Activated CD4-positive, alpha-beta T cell treated with anti-CD3 and anti-CD28 coated beads for 36 hours (primary cell): ENCODE measurements at regions of chr17 and their contacts with region 1.

Region 1: DNA sequence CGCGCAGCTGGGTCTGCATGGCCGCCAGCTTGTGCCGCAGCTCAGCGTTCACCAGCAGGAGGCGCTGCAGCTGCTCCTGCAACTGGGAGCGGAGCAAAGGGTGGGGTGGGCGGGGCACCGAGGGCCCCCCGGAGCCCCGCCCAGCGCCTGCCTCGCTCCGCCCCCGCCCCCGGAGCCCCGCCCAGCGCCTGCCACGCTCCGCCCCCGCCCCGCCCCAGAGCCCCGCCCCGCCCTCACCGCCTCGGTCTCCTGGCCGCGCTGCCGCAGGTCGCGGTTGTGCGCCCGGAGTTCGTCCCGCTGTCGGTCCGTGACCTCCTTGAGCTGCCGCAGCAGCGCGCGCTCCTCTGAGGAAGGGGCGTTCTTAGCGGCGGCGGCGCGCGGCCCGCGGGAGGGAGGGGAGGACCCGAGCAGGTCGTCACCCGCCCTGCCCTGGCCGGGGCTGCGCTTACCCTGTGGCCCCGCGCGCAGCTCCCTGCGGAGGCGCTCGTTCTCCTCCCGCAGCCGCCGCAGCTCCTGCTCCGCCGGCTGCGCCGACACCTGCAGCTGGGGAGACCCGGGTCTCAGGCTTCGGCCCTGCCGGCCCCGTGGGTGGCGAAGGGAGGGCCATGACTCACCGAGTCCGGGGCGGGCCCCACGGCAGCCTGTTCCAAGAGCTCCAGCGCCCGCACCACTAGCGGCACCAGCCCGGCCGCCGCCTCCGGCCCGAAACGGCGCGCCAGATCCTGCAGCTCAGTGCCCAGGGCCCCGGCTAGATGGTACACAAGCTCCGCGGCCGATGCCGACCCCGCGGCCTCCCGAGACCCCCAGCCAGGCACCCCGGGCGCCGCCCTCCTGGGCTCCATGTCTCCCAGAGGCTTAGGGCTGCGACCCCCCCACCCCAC is 463 bp downstream of the RILP start:
- DNase-seq: peak; percentile 97
- ATAC-seq: peak; percentile 74
- H3K4me3 Mint-ChIP-seq: peak overlapping the region; percentile 43
- H3K27ac Mint-ChIP-seq: no peak overlapping the region
- H3K4me1 Mint-ChIP-seq: peaks cover 25% of the 10 kb centered on the region
- H3K27me3 Mint-ChIP-seq: no peaks in the 10 kb centered on the region

Region 2: GRCh38 chr17:1399679-1400512 is 249.3 kb before region 1 on chr17 and contains the start of gene YWHAE:
- CTCF ChIA-PET with region 1: no interaction called
- POLR2A ChIA-PET with region 1: no interaction called
- intact Hi-C with region 1: loop called in 1 of 2 experiments (anchors 1 kb)
- DNase-seq: peak; percentile 99
- ATAC-seq: peak; percentile 95
- H3K4me3 Mint-ChIP-seq: peak within 1 kb of the TSS; percentile 100
- H3K27ac Mint-ChIP-seq: peak within 1 kb of the TSS; percentile 100
- H3K4me1 Mint-ChIP-seq: peaks cover 27% of the 10 kb centered on the region
- H3K27me3 Mint-ChIP-seq: no peaks in the 10 kb centered on the region
- total RNA-seq, gene YWHAE: 520 to 553 TPM

Region 3: GRCh38 chr17:1561400-1562175 is 87.6 kb before region 1 on chr17:
- CTCF ChIA-PET with region 1: interaction called, 3 read pairs
- POLR2A ChIA-PET with region 1: no interaction called
- intact Hi-C with region 1: loop called in 1 of 2 experiments (anchors 1 kb)
- DNase-seq: peak; percentile 64
- ATAC-seq: peak; percentile 35
- H3K4me3 Mint-ChIP-seq: peak overlapping the region; percentile 81
- H3K27ac Mint-ChIP-seq: no peak overlapping the region
- H3K4me1 Mint-ChIP-seq: peaks cover 27% of the 10 kb centered on the region
- H3K27me3 Mint-ChIP-seq: no peaks in the 10 kb centered on the region

Region 4: GRCh38 chr17:1606352-1607033 is 42.7 kb before region 1 on chr17:
- CTCF ChIA-PET with region 1: no interaction called
- POLR2A ChIA-PET with region 1: no interaction called
- intact Hi-C with region 1: no loop called
- DNase-seq: peak; percentile 67
- ATAC-seq: no peak
- H3K4me3 Mint-ChIP-seq: peak overlapping the region; percentile 21
- H3K27ac Mint-ChIP-seq: peak overlapping the region; percentile 85
- H3K4me1 Mint-ChIP-seq: peaks cover 25% of the 10 kb centered on the region
- H3K27me3 Mint-ChIP-seq: no peaks in the 10 kb centered on the region

Region 5: GRCh38 chr17:1724506-1725362 is 75.5 kb after region 1 on chr17 and contains the start of gene WDR81:
- CTCF ChIA-PET with region 1: interaction called, 6 read pairs
- POLR2A ChIA-PET with region 1: no interaction called
- intact Hi-C with region 1: loop called in 1 of 2 experiments (anchors 2 kb)
- DNase-seq: peak; percentile 95
- ATAC-seq: peak; percentile 82
- H3K4me3 Mint-ChIP-seq: peak within 1 kb of the TSS; percentile 65
- H3K27ac Mint-ChIP-seq: peak within 1 kb of the TSS; percentile 73
- H3K4me1 Mint-ChIP-seq: peaks cover 29% of the 10 kb centered on the region
- H3K27me3 Mint-ChIP-seq: no peaks in the 10 kb centered on the region
- total RNA-seq, gene WDR81: 6.9 to 8.6 TPM

Region 6: DNA sequence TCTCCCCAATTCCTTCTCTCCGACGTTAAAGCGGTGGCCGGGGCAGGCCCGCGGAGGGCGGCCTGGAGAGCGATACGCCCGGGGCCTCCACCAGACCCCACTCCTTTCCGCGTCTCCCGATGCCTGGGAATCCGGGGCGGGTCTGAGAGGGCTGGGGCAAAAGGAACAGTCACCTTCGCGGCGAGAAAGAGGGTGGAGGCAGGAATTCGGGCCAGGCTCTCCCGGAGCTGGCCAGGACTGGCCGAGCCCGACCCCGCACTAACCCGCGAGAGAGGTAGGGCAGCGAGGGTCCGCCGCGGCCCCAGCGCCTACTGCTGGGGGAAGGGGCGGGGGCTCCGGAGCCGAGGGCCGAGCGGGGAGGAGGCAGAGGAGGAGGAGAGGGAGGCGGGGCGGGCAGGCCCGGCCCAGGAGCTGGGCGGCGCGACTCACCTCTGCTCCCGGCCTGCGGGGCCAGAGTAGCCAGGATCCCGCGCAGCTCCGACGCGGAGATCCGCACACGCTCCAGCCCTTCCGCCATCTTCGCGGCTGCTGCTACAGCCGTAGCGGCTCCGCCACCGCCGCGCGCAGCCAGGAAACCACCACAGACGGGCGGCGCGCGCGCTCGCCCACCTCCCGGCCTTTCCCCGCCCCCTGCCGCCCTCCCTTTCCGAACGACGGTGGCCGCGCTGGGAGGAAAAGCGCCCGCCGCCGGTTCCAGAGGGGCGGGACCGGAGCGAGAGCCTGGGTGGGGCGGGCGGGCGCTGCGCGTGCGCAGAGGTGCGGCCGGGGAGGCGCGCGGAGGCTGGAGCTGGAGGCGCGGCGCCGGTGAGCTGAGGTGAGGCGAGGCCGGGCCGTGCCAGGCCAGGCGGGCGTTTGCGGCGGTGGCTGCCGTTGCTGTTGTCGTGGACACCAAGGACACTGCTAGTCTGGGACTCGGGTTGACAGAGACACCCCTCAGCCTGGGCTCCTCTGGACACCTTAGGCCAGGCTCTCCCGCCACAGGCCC is 654.3 kb after region 1 on chr17 and contains the starts of genes SMG6 and SRR:
- CTCF ChIA-PET with region 1: interaction called, 3 read pairs
- POLR2A ChIA-PET with region 1: no interaction called
- intact Hi-C with region 1: loop called in 1 of 2 experiments (anchors 1 kb)
- DNase-seq: peak; percentile 98
- ATAC-seq: peak; percentile 89
- H3K4me3 Mint-ChIP-seq: peak within 1 kb of the TSS; percentile 81
- H3K27ac Mint-ChIP-seq: peak within 1 kb of the TSS; percentile 61
- H3K4me1 Mint-ChIP-seq: peaks cover 46% of the 10 kb centered on the region
- H3K27me3 Mint-ChIP-seq: no peaks in the 10 kb centered on the region
- total RNA-seq, gene SMG6: 28.5 to 31.4 TPM
- total RNA-seq, gene SRR: 15.4 to 18.3 TPM